Activated CD8-positive, alpha-beta T cell treated with anti-CD3 and anti-CD28 coated beads for 36 hours (primary cell): ENCODE measurements at regions of chr14 and their contacts with region 1.

Region 1: DNA sequence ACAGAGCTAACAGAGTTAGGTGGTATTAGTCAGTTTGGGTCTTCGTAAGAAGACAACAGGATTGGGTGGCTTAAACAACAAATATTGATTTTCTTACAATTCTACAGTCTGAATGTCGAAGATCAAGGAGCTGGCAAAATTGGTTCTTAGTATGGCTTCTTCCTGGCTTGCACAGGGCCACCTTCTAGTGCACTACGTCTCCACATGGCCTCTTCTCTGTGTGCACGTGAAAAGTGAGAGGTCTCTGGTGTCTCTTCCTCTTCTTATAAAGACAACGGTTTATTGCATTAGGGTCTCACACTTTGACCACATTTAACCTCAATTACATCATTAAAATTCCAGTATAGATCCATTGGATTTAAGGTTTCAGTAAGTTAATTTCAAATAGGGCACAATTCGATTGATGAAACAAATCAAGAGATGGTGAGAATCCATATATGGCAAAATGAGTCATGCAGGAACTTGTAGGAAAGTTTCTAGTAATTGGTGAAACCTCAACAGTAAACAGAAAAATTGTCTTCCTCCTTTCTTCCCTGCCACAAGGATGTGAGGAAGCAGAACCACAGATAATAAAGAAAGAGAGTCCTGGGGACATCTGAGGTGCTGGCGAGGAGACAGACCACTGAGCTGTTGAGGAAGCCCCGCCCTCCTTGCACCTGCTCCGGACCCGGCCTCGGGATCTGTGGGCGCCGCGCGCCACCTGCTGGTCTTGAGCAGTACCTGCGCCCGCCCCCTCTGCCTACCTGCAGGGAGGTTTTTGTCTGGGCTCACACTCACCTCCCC is 846.7 kb downstream of the TMEM121 start:
- DNase-seq: peak; percentile 93
- ATAC-seq: peak; percentile 96
- H3K4me3 Mint-ChIP-seq: peak overlapping the region; percentile 45
- H3K27ac Mint-ChIP-seq: peak overlapping the region; percentile 40
- H3K4me1 Mint-ChIP-seq: peaks cover 24% of the 10 kb centered on the region
- H3K27me3 Mint-ChIP-seq: no peaks in the 10 kb centered on the region
- CTCF ChIP-seq: peak; percentile 87

Region 2: DNA sequence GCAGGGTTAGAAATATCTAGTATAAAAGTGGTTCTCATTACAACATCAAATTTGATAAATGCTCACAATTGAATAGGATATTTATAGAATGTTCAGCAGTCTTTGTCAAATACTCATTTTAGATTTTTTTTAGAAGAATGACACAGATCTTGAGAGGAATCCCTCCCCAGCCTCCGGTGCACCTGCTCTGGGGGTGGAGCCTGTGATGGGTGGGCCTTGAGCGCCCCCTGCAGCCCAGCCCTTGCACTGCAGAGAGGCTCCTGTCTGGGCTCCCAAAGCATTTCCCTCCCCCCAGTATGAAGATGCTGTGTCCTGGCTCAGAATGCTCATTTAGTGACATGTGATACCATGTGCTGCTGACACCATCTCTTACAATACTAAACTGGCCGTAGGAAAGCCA is 54.4 kb before region 1 on chr14:
- CTCF ChIA-PET with region 1: no interaction called
- POLR2A ChIA-PET with region 1: no interaction called
- intact Hi-C with region 1: no loop called
- DNase-seq: peak; percentile 67
- ATAC-seq: peak; percentile 64
- H3K4me3 Mint-ChIP-seq: no peak overlapping the region
- H3K27ac Mint-ChIP-seq: no peak overlapping the region
- H3K4me1 Mint-ChIP-seq: no peaks in the 10 kb centered on the region
- H3K27me3 Mint-ChIP-seq: no peaks in the 10 kb centered on the region
- CTCF ChIP-seq: peak; percentile 70

Region 3: GRCh38 chr14:106347890-106348755 is 24.9 kb before region 1 on chr14:
- CTCF ChIA-PET with region 1: interaction called, 38 read pairs
- POLR2A ChIA-PET with region 1: no interaction called
- intact Hi-C with region 1: no loop called
- DNase-seq: no peak
- ATAC-seq: no peak
- H3K4me3 Mint-ChIP-seq: no peak overlapping the region
- H3K27ac Mint-ChIP-seq: no peak overlapping the region
- H3K4me1 Mint-ChIP-seq: peaks cover 4% of the 10 kb centered on the region
- H3K27me3 Mint-ChIP-seq: peaks cover 3% of the 10 kb centered on the region
- CTCF ChIP-seq: no peak

Region 4: DNA sequence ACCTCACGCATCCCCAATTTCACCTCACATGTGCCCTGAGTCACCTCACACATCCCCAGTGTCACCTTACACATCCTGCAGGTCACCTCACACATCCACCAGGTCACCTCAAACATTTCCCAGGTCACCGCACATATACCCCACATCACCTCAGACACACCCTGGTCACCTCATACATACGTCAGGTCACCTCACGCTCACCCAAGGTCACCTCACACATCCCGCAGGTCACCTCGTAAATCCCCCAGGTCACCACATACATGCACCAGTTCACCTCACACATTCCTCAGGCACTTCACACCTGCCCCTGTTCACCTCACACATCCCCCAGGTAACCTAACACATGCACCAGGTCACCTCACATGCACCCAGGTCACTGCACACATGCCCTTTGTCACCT is 17.3 kb after region 1 on chr14:
- CTCF ChIA-PET with region 1: interaction called, 30 read pairs
- POLR2A ChIA-PET with region 1: interaction called, 3 read pairs
- intact Hi-C with region 1: no loop called
- DNase-seq: no peak
- ATAC-seq: peak; percentile 34
- H3K4me3 Mint-ChIP-seq: no peak overlapping the region
- H3K27ac Mint-ChIP-seq: no peak overlapping the region
- H3K4me1 Mint-ChIP-seq: peaks cover 30% of the 10 kb centered on the region
- H3K27me3 Mint-ChIP-seq: peaks cover 11% of the 10 kb centered on the region
- CTCF ChIP-seq: no peak

Region 5: DNA sequence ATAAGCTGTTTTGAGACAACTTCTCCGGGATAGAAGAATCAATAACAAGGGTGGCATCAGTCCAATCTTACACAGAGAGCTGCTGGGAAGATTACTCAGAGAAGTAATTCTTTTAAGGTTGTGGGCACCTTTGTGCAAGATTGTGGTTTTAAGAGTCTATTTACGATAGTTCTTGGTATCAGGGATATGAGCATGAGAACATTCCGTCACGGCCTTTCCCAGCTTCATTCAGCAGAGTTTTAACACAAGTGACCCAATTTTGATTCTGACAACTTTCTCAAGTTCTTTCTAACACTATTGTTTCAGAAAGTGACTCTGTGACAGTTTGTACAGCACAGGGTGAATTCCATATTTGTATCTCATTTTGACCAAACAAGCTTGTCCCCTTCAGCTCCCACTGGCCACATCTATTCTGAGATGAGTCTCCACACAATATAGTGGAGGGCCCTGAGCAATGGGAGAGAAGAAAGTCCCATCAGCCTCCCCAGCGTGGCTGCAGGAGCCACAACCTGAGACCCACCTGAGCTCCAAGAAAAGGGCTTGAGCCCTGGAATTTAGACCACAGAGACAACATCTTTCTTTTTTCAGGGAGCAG is 22.5 kb after region 1 on chr14:
- CTCF ChIA-PET with region 1: interaction called, 30 read pairs
- POLR2A ChIA-PET with region 1: interaction called, 3 read pairs
- intact Hi-C with region 1: no loop called
- DNase-seq: peak; percentile 67
- ATAC-seq: peak; percentile 64
- H3K4me3 Mint-ChIP-seq: peak overlapping the region; percentile 42
- H3K27ac Mint-ChIP-seq: peak overlapping the region; percentile 89
- H3K4me1 Mint-ChIP-seq: peaks cover 37% of the 10 kb centered on the region
- H3K27me3 Mint-ChIP-seq: peaks cover 8% of the 10 kb centered on the region
- CTCF ChIP-seq: no peak

Region 6: GRCh38 chr14:106518054-106518943 is 145.2 kb after region 1 on chr14:
- CTCF ChIA-PET with region 1: no interaction called
- POLR2A ChIA-PET with region 1: no interaction called
- intact Hi-C with region 1: no loop called
- DNase-seq: peak; percentile 94
- ATAC-seq: peak; percentile 75
- H3K4me3 Mint-ChIP-seq: no peak overlapping the region
- H3K27ac Mint-ChIP-seq: no peak overlapping the region
- H3K4me1 Mint-ChIP-seq: peaks cover 11% of the 10 kb centered on the region
- H3K27me3 Mint-ChIP-seq: peaks cover 2% of the 10 kb centered on the region
- CTCF ChIP-seq: peak; percentile 91